ENCODE measurements at regions of chr2 and their contacts with region 1.

Region 1: GRCh38 chr2:224650815-224651439 is 65.2 kb downstream of the CCDC195 start:
- DNase-seq: no peak
- ATAC-seq: no peak
- H3K4me3 Mint-ChIP-seq: no peak overlapping the region
- H3K27ac Mint-ChIP-seq: no peak overlapping the region
- H3K4me1 Mint-ChIP-seq: no peaks in the 10 kb centered on the region
- H3K27me3 Mint-ChIP-seq: no peaks in the 10 kb centered on the region
- CTCF ChIP-seq: peak; percentile 90

Region 2: DNA sequence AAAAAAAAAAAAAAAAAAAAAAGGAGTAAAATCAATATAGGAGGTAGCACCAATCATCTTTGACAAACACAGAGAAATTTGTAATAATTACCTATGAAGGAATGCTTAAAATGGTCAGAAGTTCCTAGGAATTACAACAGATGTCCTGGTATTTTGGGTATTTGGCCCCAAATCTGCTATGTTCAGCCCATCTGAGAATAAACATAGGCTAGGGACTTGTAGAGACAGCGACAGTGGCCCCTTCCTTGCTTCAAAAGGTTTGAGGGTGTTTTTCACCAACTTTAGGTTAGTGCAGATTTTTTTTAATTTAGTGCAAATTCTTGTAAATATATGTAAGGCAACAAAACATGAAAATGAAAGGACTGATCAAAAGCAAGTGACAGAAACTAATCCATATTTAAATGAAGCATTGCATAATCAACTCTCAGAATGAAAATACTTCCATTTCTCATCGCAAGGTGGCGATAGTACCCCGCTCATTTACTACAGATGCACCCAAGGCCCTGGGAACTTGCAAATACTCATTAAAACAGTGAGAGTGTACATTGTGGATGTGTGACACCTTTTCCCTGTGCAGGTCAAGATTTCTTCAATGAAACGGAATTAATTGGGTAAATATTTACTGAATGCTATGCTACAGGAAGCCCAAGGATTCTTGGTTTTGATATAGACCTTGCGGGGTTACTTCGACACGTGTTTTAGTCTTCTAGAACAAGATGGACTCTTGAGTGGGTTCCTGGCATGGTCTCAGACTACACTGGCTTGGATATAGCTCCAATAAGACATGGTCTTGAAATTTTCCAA is 293.6 kb before region 1 on chr2:
- CTCF ChIA-PET with region 1: interaction called, 29 read pairs
- POLR2A ChIA-PET with region 1: no interaction called
- intact Hi-C with region 1: loop called (anchors 2 kb)
- DNase-seq: peak; percentile 61
- ATAC-seq: peak; percentile 65
- H3K4me3 Mint-ChIP-seq: no peak overlapping the region
- H3K27ac Mint-ChIP-seq: no peak overlapping the region
- H3K4me1 Mint-ChIP-seq: no peaks in the 10 kb centered on the region
- H3K27me3 Mint-ChIP-seq: peaks cover 2% of the 10 kb centered on the region
- CTCF ChIP-seq: peak; percentile 82

Region 3: GRCh38 chr2:224369028-224369632 is 281.8 kb before region 1 on chr2:
- CTCF ChIA-PET with region 1: interaction called, 15 read pairs
- POLR2A ChIA-PET with region 1: no interaction called
- intact Hi-C with region 1: no loop called
- DNase-seq: peak; percentile 26
- ATAC-seq: no peak
- H3K4me3 Mint-ChIP-seq: no peak overlapping the region
- H3K27ac Mint-ChIP-seq: no peak overlapping the region
- H3K4me1 Mint-ChIP-seq: no peaks in the 10 kb centered on the region
- H3K27me3 Mint-ChIP-seq: peaks cover 1% of the 10 kb centered on the region
- CTCF ChIP-seq: peak; percentile 85

Region 4: DNA sequence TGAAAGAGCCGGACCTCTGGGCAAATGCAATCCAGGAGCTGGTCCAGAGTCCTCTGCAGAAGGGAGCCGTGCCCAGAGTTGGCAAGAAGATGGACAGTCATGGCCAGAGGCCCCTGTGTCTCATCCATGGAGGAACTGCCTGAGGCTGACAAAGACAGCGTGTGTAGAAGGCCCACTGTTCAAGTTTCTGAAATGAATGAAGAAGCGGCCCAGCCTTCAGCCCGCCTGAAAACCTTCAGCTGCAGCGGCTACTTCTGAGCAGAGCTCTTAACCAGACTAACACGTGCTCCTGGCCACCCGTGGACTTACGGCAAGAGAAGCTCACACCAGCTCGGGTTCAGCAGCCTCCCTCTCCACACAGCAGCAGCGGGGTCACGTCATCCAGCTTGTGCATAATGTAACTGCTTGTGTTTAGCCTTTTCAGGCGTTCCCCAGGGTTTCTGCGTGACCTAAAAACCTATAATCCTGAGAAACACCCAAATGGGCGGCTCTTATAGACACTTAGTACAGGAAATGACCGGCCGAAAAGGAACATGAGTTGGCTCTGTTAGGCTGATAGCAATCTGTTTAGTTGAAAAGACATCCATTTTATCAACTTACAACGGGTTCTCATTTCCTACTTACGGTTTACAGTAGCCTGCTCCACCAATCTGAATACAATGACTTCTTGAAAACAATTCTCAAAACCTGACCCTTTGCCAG is 249.1 kb before region 1 on chr2 and contains the start of gene FAM124B:
- CTCF ChIA-PET with region 1: interaction called, 16 read pairs
- POLR2A ChIA-PET with region 1: interaction called, 3 read pairs
- intact Hi-C with region 1: no loop called
- DNase-seq: peak; percentile 47
- ATAC-seq: peak; percentile 81
- H3K4me3 Mint-ChIP-seq: peak within 1 kb of the TSS; percentile 57
- H3K27ac Mint-ChIP-seq: peak within 1 kb of the TSS; percentile 64
- H3K4me1 Mint-ChIP-seq: peaks cover 7% of the 10 kb centered on the region
- H3K27me3 Mint-ChIP-seq: peaks cover 14% of the 10 kb centered on the region
- CTCF ChIP-seq: no peak
- total RNA-seq, gene FAM124B: 0.25 TPM in 1 of 2 experiments, not detected in the other

Region 5: GRCh38 chr2:224638301-224638823 is 12.6 kb before region 1 on chr2:
- CTCF ChIA-PET with region 1: interaction called, 15 read pairs
- POLR2A ChIA-PET with region 1: no interaction called
- intact Hi-C with region 1: no loop called
- DNase-seq: peak; percentile 7
- ATAC-seq: no peak
- H3K4me3 Mint-ChIP-seq: no peak overlapping the region
- H3K27ac Mint-ChIP-seq: peak overlapping the region; percentile 56
- H3K4me1 Mint-ChIP-seq: peaks cover 8% of the 10 kb centered on the region
- H3K27me3 Mint-ChIP-seq: no peaks in the 10 kb centered on the region
- CTCF ChIP-seq: no peak

Region 6: GRCh38 chr2:224666951-224667553 is 16.1 kb after region 1 on chr2:
- CTCF ChIA-PET with region 1: interaction called, 11 read pairs
- POLR2A ChIA-PET with region 1: interaction called, 3 read pairs
- intact Hi-C with region 1: no loop called
- DNase-seq: no peak
- ATAC-seq: no peak
- H3K4me3 Mint-ChIP-seq: no peak overlapping the region
- H3K27ac Mint-ChIP-seq: no peak overlapping the region
- H3K4me1 Mint-ChIP-seq: no peaks in the 10 kb centered on the region
- H3K27me3 Mint-ChIP-seq: peaks cover 4% of the 10 kb centered on the region
- CTCF ChIP-seq: no peak

Region 7: GRCh38 chr2:224764565-224765236 is 113.8 kb after region 1 on chr2:
- CTCF ChIA-PET with region 1: no interaction called
- POLR2A ChIA-PET with region 1: no interaction called
- intact Hi-C with region 1: no loop called
- DNase-seq: no peak
- ATAC-seq: peak; percentile 78
- H3K4me3 Mint-ChIP-seq: no peak overlapping the region
- H3K27ac Mint-ChIP-seq: peak overlapping the region; percentile 77
- H3K4me1 Mint-ChIP-seq: peaks cover 32% of the 10 kb centered on the region
- H3K27me3 Mint-ChIP-seq: no peaks in the 10 kb centered on the region
- CTCF ChIP-seq: no peak

Measured in activated CD8-positive, alpha-beta T cell treated with anti-CD3 and anti-CD28 coated beads for 36 hours (primary cell).